ENCODE measurements at regions of chr3 and their contacts with region 1.

Region 1: DNA sequence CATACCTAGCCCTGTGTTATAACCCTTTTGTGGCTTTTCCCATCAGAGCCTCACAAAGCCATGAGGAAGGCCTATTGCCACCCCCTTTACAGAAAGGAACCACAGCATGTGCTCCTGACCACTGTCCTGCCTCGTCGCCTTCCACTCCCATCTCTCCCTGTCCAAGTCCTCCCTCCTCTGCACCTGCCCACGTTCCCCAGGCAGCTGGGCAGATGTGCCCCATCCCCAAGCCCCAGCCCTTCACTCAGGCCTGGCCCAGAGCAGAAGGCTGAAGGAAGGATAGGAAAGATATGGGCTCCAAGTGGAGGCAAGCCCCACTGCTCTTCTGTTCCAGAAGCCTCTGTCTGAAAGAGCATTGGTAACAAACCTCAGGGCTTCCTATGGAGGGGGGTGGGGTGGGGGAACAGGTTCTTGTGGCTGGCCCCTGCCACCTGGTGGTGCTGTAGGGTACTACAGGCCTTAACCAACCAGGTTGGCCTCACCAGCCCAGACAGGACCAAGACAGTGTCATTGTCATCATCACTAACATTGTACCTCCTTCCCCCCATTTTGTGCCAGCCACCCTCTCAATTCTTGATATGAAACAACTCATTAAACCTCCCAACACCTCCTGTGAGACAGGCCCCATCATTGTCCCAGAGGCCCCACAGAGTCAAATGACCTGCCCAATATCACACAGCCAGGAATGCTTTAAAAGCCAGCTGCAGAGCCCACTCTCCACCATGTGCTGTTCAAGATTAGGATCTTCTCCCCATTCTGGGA is 10.0 kb downstream of the POC1A start:
- DNase-seq: peak; percentile 53
- H3K4me3 ChIP-seq: no peak overlapping the region
- H3K27ac ChIP-seq: no peak overlapping the region
- H3K4me1 ChIP-seq: peaks cover 9% of the 10 kb centered on the region
- H3K27me3 ChIP-seq: no peaks in the 10 kb centered on the region
- CTCF ChIP-seq: peak; percentile 82 to 94

Region 2: DNA sequence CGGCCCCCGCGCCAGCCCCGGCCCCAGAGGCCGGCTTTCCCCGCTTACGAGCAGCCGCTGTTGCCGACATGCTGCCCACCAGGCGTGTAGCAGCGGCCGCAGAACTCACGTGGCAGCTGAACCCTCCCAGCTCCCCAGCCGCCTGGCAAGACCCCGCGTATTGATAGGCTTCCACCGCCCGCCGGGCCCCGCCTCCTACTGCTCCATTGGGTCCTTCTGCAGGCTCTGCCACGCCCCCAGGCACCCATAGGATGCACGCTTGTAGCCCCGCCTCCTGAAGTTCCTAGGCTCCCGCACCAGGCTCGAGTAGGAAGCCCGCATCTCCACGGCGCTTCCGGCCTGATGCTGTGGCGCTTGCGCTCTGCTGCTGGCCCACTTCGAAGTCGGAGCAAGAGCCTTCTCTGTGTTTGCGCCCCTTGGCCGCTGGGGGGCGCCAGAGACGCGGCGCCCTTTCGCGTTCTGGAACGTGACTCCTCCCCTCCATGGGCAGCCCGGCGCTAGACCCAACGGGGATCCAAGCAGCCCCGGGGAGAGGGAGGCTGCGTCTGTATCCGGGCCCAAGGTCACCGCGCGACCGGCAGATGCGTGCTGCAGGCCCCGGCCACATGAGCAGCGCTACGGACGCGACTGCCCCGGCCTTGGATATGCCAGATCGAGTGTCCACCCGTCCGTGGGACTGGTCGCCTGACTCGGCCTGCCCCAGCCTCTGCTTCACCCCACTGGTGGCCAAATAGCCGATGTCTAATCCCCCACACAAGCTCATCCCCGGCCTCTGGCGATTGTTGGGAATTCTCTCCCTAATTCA is 202.2 kb before region 1 on chr3 and contains the starts of genes PARP3 and RRP9:
- CTCF ChIA-PET with region 1: no interaction called
- dilution Hi-C with region 1: no loop called
- in situ Hi-C with region 1: no loop called
- intact Hi-C with region 1: loop called (anchors 1 kb)
- DNase-seq: peak; percentile 100
- H3K4me3 ChIP-seq: peak within 1 kb of the TSS; percentile 62 to 80 (median 73)
- H3K27ac ChIP-seq: peak within 1 kb of the TSS; percentile 38
- H3K4me1 ChIP-seq: peaks cover 21% of the 10 kb centered on the region
- H3K27me3 ChIP-seq: no peaks in the 10 kb centered on the region
- CTCF ChIP-seq: peak; percentile 98 to 100
- total RNA-seq, gene PARP3: 16.1 to 19.7 TPM
- total RNA-seq, gene RRP9: 22.3 to 44.5 TPM

Region 3: DNA sequence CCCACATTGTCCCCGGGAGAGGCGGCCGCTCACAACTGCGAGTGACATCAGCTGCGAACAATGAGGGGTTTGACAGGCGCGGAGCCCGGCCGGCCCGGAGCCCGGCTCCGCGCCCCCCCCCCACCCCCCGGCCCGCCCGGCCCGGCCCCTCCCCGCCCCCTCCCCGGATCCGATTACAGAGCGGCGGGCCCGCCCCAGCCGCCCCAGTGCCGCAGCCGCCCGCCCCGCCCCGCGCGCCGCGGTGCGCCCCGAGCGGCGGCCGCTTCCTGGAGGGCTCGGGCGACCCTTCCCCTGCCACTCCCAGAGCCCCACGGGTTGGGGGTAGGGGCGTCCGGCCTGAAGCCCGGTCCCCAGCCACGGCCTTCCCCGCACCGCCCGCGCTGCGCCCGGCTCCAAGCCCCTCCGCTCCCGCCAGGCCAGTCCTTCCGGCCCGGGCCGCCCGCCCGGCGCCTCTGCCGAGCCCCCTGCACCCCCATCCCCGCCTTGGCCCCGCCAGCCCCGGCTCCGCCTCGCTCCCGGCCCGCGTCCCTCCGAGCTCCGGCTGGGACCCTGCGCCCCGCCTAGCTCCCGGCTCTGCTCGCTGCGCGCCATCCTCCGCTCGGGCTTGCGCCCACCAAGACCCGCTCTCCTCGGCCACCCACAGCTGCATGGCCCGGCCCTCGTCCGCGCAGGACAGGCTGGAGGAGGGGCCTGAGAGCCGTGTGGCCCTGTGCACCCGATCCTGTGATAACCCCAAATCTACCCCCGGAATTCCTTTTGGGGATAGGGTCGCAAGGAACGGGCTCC is 176.6 kb before region 1 on chr3 and contains the start of gene PCBP4:
- CTCF ChIA-PET with region 1: no interaction called
- dilution Hi-C with region 1: loop called (anchors 10 kb)
- in situ Hi-C with region 1: no loop called
- intact Hi-C with region 1: no loop called
- DNase-seq: no peak
- H3K4me3 ChIP-seq: peak within 1 kb of the TSS; percentile 44 to 83 (median 75)
- H3K27ac ChIP-seq: peak within 1 kb of the TSS; percentile 21
- H3K4me1 ChIP-seq: peaks cover 19% of the 10 kb centered on the region
- H3K27me3 ChIP-seq: no peaks in the 10 kb centered on the region
- CTCF ChIP-seq: no peak
- total RNA-seq, gene PCBP4: 51.0 to 61.1 TPM

Region 4: GRCh38 chr3:52123106-52123725 is 21.0 kb before region 1 on chr3:
- CTCF ChIA-PET with region 1: no interaction called
- dilution Hi-C with region 1: no loop called
- in situ Hi-C with region 1: no loop called
- intact Hi-C with region 1: loop called (anchors 1 kb)
- DNase-seq: peak; percentile 66
- H3K4me3 ChIP-seq: no peak overlapping the region
- H3K27ac ChIP-seq: no peak overlapping the region
- H3K4me1 ChIP-seq: peaks cover 26% of the 10 kb centered on the region
- H3K27me3 ChIP-seq: no peaks in the 10 kb centered on the region
- CTCF ChIP-seq: peak; percentile 99